ENCODE measurements at regions of chr2 and their contacts with region 1.

Region 1: GRCh38 chr2:181891966-181892798 is 652 bp downstream of the ITPRID2 start:
- DNase-seq: peak; percentile 63
- ATAC-seq: peak; percentile 49
- H3K4me3 Mint-ChIP-seq: peak overlapping the region; percentile 92
- H3K27ac Mint-ChIP-seq: peak overlapping the region; percentile 65
- H3K4me1 Mint-ChIP-seq: peaks cover 25% of the 10 kb centered on the region
- H3K27me3 Mint-ChIP-seq: peaks cover 9% of the 10 kb centered on the region
- CTCF ChIP-seq: no peak

Region 2: GRCh38 chr2:180334514-180334913 is 1557.7 kb before region 1 on chr2:
- CTCF ChIA-PET with region 1: no interaction called
- POLR2A ChIA-PET with region 1: no interaction called
- intact Hi-C with region 1: loop called (anchors 10 kb)
- DNase-seq: no peak
- ATAC-seq: peak; percentile 92
- H3K4me3 Mint-ChIP-seq: peak overlapping the region; percentile 4
- H3K27ac Mint-ChIP-seq: peak overlapping the region; percentile 64
- H3K4me1 Mint-ChIP-seq: peaks cover 24% of the 10 kb centered on the region
- H3K27me3 Mint-ChIP-seq: no peaks in the 10 kb centered on the region
- CTCF ChIP-seq: no peak

Region 3: DNA sequence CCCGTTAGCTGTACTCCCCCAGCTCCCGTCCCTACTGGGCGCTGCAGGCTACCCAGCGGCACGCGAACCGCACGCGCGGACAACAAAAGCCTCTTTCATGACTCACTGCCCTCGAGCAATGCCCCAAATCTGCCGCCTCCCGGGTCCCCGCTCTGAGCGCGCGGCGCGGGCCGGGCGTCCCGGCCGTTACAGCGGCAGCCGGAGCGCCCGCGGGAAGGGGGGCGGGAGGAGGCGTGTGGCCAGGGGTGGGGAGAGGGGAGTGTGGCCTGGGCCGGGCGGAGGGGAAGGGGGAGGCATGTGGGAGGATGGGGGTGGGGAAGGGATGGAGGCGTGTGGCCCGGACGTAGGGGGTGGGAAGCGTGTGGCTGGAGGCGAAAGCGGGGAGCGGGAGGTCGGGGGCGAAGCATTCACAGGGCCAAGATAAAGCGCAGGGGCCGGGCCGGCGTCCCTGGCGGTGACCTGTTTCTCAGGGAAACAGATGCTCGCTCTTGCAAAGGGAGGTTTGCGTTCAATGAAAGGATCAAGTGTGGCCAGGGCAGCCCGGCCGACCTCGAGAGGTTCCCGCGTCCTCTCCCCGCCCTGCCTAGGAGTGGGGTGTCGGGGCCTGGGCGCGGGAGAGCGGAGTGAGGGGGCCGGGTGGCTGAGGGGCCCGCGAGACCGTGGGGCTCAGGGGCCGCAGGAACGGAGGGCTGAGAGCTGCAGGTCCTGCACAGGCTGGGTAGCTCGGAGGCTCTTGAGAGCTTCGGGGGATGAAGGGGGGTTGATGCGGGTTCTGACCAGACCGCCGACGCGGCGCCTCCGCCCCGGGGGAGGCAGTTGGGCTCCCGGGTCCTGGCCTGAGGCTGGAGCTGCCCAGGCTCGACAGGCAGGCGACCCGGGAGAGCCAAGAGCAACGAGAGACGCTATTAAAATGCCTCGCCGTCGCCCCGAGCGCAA is 208.4 kb before region 1 on chr2:
- CTCF ChIA-PET with region 1: no interaction called
- POLR2A ChIA-PET with region 1: no interaction called
- intact Hi-C with region 1: loop called (anchors 5 kb)
- DNase-seq: peak; percentile 24
- ATAC-seq: peak; percentile 43
- H3K4me3 Mint-ChIP-seq: peak overlapping the region; percentile 68
- H3K27ac Mint-ChIP-seq: no peak overlapping the region
- H3K4me1 Mint-ChIP-seq: peaks cover 51% of the 10 kb centered on the region
- H3K27me3 Mint-ChIP-seq: peaks cover 81% of the 10 kb centered on the region
- CTCF ChIP-seq: no peak

Region 4: DNA sequence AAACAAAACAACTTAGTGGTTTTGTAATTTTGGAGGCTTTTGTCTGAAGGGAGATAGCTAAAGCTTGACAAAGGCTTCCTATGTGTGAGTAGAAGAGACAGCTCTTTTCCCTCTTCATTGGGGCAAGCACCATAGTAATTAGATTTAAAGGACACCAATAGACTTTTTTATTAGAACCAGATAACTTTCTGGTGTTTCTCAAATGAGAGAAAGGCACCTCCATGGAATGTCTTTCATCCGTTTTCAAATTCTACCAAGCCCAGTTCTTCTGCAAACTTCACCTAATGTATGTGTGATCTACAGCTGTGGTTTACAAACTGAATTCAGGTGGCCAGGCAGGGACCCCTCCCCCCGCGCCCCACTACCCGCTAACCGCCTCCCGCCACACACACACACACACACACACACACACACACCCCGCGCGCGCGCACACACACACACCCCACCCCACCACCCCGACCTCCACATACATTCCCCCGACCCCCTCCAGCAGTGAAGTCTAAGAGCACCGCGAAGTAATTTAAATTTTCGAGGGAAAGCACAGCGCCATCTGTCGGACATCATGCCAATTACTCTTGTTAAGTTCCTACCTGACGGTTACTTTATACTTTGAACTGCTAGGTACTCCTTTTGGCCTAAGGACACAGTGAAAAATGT is 61.8 kb after region 1 on chr2:
- CTCF ChIA-PET with region 1: no interaction called
- POLR2A ChIA-PET with region 1: no interaction called
- intact Hi-C with region 1: loop called (anchors 2 kb)
- DNase-seq: no peak
- ATAC-seq: peak; percentile 73
- H3K4me3 Mint-ChIP-seq: peak overlapping the region; percentile 44
- H3K27ac Mint-ChIP-seq: no peak overlapping the region
- H3K4me1 Mint-ChIP-seq: peaks cover 5% of the 10 kb centered on the region
- H3K27me3 Mint-ChIP-seq: peaks cover 6% of the 10 kb centered on the region
- CTCF ChIP-seq: no peak

Region 5: DNA sequence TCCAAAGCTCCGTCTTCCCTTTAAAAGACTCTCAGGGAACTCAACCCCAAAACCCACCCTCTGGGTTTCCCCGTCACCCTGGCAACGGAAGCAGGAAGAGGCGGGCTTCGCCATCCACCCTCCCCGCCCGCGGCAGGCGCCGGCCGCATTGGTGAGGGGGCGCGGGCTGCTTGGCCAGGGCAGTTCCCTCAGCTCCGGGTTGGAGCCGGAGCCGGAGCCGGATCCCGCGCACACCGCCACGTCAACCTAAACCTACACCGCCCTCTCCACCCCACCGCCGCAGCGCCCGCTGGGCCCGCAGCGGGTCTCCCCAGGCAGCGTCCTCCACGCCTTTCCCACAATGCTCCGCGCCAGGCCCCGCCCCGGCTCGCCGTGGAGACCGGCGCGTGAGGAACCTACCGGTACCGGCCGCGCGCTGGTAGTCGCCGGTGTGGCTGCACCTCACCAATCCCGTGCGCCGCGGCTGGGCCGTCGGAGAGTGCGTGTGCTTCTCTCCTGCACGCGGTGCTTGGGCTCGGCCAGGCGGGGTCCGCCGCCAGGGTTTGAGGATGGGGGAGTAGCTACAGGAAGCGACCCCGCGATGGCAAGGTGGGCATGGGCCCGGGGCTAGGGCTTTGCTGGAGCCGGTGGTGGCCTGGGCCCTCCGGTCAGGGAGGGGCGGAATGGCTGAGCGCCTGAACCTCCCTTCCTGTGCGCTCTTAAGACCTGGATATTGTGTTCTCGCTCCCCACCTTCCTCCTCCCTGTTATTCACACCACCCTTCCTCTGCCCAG is 823.9 kb after region 1 on chr2 and contains the start of gene DNAJC10:
- CTCF ChIA-PET with region 1: no interaction called
- POLR2A ChIA-PET with region 1: interaction called, 4 read pairs
- intact Hi-C with region 1: loop called (anchors 1 kb)
- DNase-seq: peak; percentile 94
- ATAC-seq: peak; percentile 78
- H3K4me3 Mint-ChIP-seq: no peak within 1 kb of the TSS
- H3K27ac Mint-ChIP-seq: no peak within 1 kb of the TSS
- H3K4me1 Mint-ChIP-seq: peaks cover 12% of the 10 kb centered on the region
- H3K27me3 Mint-ChIP-seq: no peaks in the 10 kb centered on the region
- CTCF ChIP-seq: no peak
- total RNA-seq, gene DNAJC10: 119 and 132 TPM in 2 replicates

Region 6: DNA sequence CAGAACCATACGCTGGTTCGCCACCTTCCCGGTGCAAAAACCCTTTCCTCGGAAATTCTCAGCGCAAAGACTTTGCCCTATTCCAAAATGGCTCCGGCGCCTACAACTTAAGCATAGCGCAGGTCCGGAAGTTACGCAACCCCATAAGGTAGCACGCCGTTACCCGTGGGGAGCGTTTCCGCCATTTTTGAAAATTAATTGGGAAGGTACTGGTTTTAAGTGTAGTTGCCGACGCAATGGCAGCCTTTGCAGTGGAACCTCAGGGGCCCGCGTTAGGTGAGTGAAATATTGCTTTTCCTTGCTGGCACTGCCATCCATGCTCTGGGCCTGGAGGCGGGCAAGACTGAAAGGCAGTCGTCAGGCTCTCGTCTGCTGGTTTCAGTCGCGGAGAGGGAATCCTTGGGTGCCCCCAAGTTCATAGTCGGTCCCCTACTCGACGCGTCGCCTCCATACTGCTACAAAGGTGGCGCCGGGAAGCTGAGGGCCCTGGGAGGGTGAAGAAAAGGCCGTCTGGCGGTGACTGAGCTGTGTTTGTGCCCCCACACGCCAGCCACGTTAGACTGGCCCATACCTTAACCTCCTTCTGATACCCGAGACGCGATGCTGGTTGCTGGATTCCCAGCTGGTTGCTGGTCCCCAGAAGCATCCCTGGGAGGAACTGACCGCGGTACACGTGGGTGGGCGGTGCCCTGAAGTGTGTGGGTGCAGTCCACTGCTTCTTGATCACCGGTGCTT is 1232.2 kb after region 1 on chr2 and contains the start of gene NUP35:
- CTCF ChIA-PET with region 1: no interaction called
- POLR2A ChIA-PET with region 1: interaction called, 3 read pairs
- intact Hi-C with region 1: loop called (anchors 5 kb)
- DNase-seq: peak; percentile 70
- ATAC-seq: peak; percentile 96
- H3K4me3 Mint-ChIP-seq: peak within 1 kb of the TSS; percentile 96
- H3K27ac Mint-ChIP-seq: peak within 1 kb of the TSS; percentile 95
- H3K4me1 Mint-ChIP-seq: peaks cover 29% of the 10 kb centered on the region
- H3K27me3 Mint-ChIP-seq: peaks cover 11% of the 10 kb centered on the region
- CTCF ChIP-seq: no peak
- total RNA-seq, gene NUP35: 19.6 and 25.1 TPM in 2 replicates